Activated T-helper 2 cell treated with anti-CD3 and anti-CD28 coated beads, Interferon-gamma antibody, Interleukin-2, Interleukin-4, amounts not matched to agents 10 μg/mL and 5 μg/mL and 100 μg/mL, durations not matched to agents 14 hours and 24 hours and 36 hours (primary cell): ENCODE measurements at regions of chr12 and their contacts with region 1.

Region 1: GRCh38 chr12:98725476-98726247 is 80.6 kb downstream of the APAF1 start:
- DNase-seq: peak; percentile 34
- H3K4me3 Mint-ChIP-seq: no peak overlapping the region
- H3K27ac Mint-ChIP-seq: peak overlapping the region; percentile 67
- H3K4me1 Mint-ChIP-seq: peaks cover 19% of the 10 kb centered on the region
- H3K27me3 Mint-ChIP-seq: no peaks in the 10 kb centered on the region

Region 2: DNA sequence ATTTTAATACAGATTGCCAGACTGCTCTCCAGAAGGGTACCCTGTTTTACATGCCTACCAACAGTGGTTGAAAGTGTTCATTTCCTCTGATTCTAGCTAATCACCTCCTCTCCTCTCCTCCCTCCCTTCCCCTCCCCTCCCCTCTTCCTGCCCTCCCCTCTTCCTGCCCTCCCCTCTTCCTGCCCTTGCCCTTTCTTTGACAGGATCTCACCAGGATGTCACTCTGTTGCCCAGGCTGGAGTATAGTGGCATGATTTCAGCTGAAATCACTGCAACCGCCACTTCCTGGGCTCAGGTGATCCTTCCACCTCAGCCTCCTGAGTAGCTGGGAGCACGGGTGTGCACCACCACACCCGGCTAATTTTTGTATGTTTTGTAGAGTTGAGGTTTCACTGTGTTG is 55.9 kb before region 1 on chr12:
- intact Hi-C with region 1: no loop called
- DNase-seq: no peak
- H3K4me3 Mint-ChIP-seq: no peak overlapping the region
- H3K27ac Mint-ChIP-seq: no peak overlapping the region
- H3K4me1 Mint-ChIP-seq: peaks cover 14% of the 10 kb centered on the region
- H3K27me3 Mint-ChIP-seq: no peaks in the 10 kb centered on the region

Region 3: GRCh38 chr12:98799146-98799810 is 73.6 kb after region 1 on chr12:
- intact Hi-C with region 1: loop called (anchors 5 kb)
- DNase-seq: no peak
- H3K4me3 Mint-ChIP-seq: no peak overlapping the region
- H3K27ac Mint-ChIP-seq: no peak overlapping the region
- H3K4me1 Mint-ChIP-seq: no peaks in the 10 kb centered on the region
- H3K27me3 Mint-ChIP-seq: peaks cover 36% of the 10 kb centered on the region

Region 4: GRCh38 chr12:99068993-99069747 is 343.5 kb after region 1 on chr12:
- intact Hi-C with region 1: no loop called
- DNase-seq: no peak
- H3K4me3 Mint-ChIP-seq: no peak overlapping the region
- H3K27ac Mint-ChIP-seq: no peak overlapping the region
- H3K4me1 Mint-ChIP-seq: no peaks in the 10 kb centered on the region
- H3K27me3 Mint-ChIP-seq: no peaks in the 10 kb centered on the region

Region 5: DNA sequence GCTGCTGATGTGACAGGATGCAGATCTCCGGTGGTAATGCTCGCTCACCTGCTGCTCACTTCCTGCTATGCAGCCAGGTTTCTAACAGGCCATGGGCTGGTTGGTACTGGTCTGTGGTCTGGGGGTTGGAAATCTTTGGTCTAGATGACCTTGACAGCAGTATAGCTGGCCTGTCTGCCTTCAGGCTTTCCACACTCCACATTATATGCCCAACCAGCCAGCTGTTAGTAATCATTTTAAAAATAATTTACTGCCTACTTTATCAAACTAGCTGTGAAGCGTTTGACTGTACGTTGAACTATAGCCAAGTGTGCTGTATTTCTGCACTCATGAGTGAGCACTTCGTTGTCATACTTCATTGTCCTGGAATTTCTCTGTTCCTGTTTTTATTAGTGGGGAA is 497.9 kb after region 1 on chr12:
- intact Hi-C with region 1: no loop called
- DNase-seq: no peak
- H3K4me3 Mint-ChIP-seq: no peak overlapping the region
- H3K27ac Mint-ChIP-seq: no peak overlapping the region
- H3K4me1 Mint-ChIP-seq: no peaks in the 10 kb centered on the region
- H3K27me3 Mint-ChIP-seq: no peaks in the 10 kb centered on the region